Dorsolateral prefrontal cortex (tissue), 120 donors: ENCODE measurements at regions of chr2 and their contacts with region 1.

Region 1: GRCh38 chr2:133886735-133887660 is 318.7 kb upstream of the NCKAP5 start:
- DNase-seq: peak; percentile 49 to 91 (median 84)
- H3K4me3 ChIP-seq: peak overlapping the region in 17 of 59 donors; percentile 1 to 37 (median 21)
- H3K27ac ChIP-seq: peak overlapping the region in 1 of 59 donors; percentile 10
- H3K27me3 ChIP-seq: peaks cover 0 to 2% (median 0%) of the 10 kb centered on the region in 45 donors
- CTCF ChIP-seq: peak; percentile 55 to 83 (median 72)

Region 2: DNA sequence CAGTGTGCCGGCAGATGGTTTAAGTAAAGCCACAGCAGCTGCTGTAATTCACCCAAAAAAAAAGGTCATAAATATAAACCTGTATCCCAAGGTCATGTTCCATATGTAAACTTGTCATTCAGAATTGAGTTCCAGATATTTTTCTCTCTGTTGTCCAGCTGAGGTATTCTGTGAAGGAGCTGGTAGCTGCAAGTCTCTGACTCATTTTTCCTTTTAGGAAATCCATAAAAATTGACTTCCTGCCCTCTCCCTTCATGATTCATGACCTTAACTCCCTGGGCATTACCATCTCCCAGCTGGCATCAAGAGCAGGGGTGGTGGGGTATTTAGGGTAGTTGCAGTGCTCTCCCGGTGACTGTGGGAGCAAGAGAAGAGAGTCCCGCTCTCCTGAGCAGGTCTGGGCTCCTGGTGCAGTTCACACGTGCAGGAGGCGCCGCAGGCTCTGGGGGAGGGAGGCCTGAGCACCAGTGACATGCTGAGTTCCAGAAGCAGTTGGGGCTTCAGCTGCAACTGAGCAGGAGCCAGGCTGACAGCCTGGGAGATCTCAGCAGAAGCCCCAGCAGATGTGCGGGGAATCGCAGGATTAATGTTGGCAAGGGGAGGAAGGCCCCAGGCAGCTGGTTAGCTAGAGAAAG is 559.5 kb after region 1 on chr2:
- intact Hi-C with region 1: loop called (anchors 5 kb)
- DNase-seq: peak in 2 of 10 donors; percentile 30 to 48
- H3K4me3 ChIP-seq: no peak overlapping the region
- H3K27ac ChIP-seq: peak overlapping the region in 33 of 59 donors; percentile 0 to 69 (median 42)
- H3K27me3 ChIP-seq: no peaks in the 10 kb centered on the region
- CTCF ChIP-seq: no peak